ENCODE measurements at regions of chr3 and their contacts with region 1.

Region 1: GRCh38 chr3:140206196-140207048 is 271.4 kb downstream of the CLSTN2 start:
- DNase-seq: no peak
- ATAC-seq: peak; percentile 60

Region 2: GRCh38 chr3:140128631-140129030 is 77.8 kb before region 1 on chr3:
- intact Hi-C with region 1: loop called (anchors 2 kb)
- DNase-seq: no peak
- ATAC-seq: peak; percentile 68